Dorsolateral prefrontal cortex (tissue), 120 donors: ENCODE measurements at regions of chr12 and their contacts with region 1.

Region 1: DNA sequence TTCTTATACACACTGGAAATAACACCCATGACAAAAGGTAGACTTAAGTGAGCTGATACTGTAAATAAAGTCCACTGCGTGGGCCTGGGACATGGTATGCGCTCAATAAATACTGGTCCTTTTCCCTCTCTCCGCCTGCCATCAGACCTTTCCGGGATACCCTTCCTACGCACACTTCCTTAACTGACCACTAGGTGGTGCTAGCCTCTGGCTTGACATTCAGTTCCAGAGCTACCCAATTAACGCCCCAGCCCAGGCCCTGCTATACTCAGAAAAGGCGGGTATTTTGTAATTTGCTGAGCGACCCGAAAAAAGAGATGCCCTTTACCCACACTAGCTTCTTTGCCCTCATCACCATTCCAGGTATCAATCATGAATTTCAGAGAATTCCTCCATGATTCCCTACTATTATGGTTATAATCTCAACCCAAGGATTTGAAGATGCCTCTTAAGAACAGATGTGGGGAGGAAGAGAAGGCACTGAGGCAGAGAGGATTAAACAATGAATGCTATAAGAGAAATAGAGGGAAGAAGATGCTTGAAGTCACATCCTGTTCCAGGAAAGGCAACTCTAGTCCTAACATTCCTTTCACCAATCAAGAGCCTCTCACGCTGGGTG is 3.9 kb upstream of the LRP1 start:
- DNase-seq: peak in 7 of 10 donors; percentile 59 to 86 (median 76)
- H3K4me3 ChIP-seq: no peak overlapping the region
- H3K27ac ChIP-seq: peak overlapping the region in 1 of 59 donors; percentile 44
- H3K27me3 ChIP-seq: no peaks in the 10 kb centered on the region
- CTCF ChIP-seq: peak; percentile 88 to 99 (median 97)

Region 2: DNA sequence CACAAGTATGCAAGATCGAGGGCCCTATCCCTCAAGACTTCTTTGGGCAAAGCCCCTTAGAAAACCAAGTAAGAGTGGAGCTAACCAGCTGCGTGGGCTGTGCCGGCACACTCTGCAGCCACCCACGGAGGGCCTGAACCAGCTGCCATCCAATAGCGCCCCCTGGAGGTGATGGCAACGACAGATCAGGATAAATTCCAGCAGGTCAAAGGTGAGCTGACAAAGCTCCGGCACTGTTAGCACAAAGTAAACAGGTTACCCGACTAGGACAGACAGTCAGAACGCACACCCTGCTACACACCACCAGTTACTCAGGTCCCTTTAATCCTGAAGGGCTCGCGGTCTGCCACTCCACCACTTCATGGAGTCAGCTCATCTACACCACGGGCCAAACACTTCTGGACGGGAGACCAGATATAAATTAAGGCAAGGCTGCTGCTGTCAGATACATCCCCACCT is 122.9 kb before region 1 on chr12:
- intact Hi-C with region 1: no loop called
- DNase-seq: peak in 4 of 10 donors; percentile 16 to 50 (median 34)
- H3K4me3 ChIP-seq: peak overlapping the region in 1 of 59 donors; percentile 20
- H3K27ac ChIP-seq: no peak overlapping the region
- H3K27me3 ChIP-seq: no peaks in the 10 kb centered on the region
- CTCF ChIP-seq: peak; percentile 30 to 72 (median 59)

Region 3: GRCh38 chr12:57019983-57020719 is 104.2 kb before region 1 on chr12:
- intact Hi-C with region 1: no loop called
- DNase-seq: no peak
- H3K4me3 ChIP-seq: no peak overlapping the region
- H3K27ac ChIP-seq: no peak overlapping the region
- H3K27me3 ChIP-seq: peaks cover 0 to 12% (median 0%) of the 10 kb centered on the region in 45 donors
- CTCF ChIP-seq: no peak

Region 4: DNA sequence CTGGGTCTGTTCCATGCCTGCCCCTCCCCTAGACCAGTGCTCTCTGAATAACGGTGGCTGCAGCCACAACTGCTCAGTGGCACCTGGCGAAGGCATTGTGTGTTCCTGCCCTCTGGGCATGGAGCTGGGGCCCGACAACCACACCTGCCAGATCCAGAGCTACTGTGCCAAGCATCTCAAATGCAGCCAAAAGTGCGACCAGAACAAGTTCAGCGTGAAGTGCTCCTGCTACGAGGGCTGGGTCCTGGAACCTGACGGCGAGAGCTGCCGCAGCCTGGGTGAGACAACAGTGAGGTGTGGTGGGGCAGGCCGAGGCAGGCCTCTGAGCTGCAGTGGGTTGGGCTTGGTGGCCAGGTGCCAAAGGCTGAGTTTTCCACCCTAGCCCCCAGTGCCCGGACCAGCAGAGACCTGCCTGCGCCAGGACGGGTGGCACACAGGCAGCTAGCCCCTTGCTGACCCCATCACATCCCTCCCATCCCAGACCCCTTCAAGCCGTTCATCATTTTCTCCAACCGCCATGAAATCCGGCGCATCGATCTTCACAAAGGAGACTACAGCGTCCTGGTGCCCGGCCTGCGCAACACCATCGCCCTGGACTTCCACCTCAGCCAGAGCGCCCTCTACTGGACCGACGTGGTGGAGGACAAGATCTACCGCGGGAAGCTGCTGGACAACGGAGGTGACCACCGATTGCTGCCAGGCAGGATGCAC is 51.2 kb after region 1 on chr12:
- intact Hi-C with region 1: loop called (anchors 2 kb)
- DNase-seq: peak; percentile 70 to 92 (median 80)
- H3K4me3 ChIP-seq: peak overlapping the region in 18 of 59 donors; percentile 5 to 37 (median 20)
- H3K27ac ChIP-seq: peak overlapping the region in 40 of 59 donors; percentile 7 to 82 (median 46)
- H3K27me3 ChIP-seq: no peaks in the 10 kb centered on the region
- CTCF ChIP-seq: peak; percentile 53 to 89 (median 78)

Region 5: GRCh38 chr12:57182921-57183790 is 58.8 kb after region 1 on chr12:
- intact Hi-C with region 1: loop called (anchors 2 kb)
- DNase-seq: peak in 8 of 10 donors; percentile 56 to 83 (median 64)
- H3K4me3 ChIP-seq: no peak overlapping the region
- H3K27ac ChIP-seq: no peak overlapping the region
- H3K27me3 ChIP-seq: no peaks in the 10 kb centered on the region
- CTCF ChIP-seq: peak; percentile 46 to 93 (median 86)

Region 6: GRCh38 chr12:57238854-57239554 is 114.6 kb after region 1 on chr12:
- intact Hi-C with region 1: loop called (anchors 2 to 5 kb)
- DNase-seq: peak; percentile 75 to 89 (median 86)
- H3K4me3 ChIP-seq: peak overlapping the region; percentile 31 to 81 (median 67)
- H3K27ac ChIP-seq: peak overlapping the region in 52 of 59 donors; percentile 54 to 96 (median 87)
- H3K27me3 ChIP-seq: peaks cover 0 to 30% (median 0%) of the 10 kb centered on the region in 45 donors
- CTCF ChIP-seq: peak; percentile 85 to 100 (median 100)